ENCODE measurements at regions of chr14 and their contacts with region 1.

Region 1: GRCh38 chr14:21014761-21015190 is 10.1 kb downstream of the NDRG2 start:
- DNase-seq: peak; percentile 92
- ATAC-seq: peak; percentile 91
- H3K4me3 Mint-ChIP-seq: no peak overlapping the region
- H3K27ac Mint-ChIP-seq: no peak overlapping the region
- H3K4me1 Mint-ChIP-seq: peaks cover 12% of the 10 kb centered on the region
- H3K27me3 Mint-ChIP-seq: peaks cover 3% of the 10 kb centered on the region
- CTCF ChIP-seq: peak; percentile 84

Region 2: DNA sequence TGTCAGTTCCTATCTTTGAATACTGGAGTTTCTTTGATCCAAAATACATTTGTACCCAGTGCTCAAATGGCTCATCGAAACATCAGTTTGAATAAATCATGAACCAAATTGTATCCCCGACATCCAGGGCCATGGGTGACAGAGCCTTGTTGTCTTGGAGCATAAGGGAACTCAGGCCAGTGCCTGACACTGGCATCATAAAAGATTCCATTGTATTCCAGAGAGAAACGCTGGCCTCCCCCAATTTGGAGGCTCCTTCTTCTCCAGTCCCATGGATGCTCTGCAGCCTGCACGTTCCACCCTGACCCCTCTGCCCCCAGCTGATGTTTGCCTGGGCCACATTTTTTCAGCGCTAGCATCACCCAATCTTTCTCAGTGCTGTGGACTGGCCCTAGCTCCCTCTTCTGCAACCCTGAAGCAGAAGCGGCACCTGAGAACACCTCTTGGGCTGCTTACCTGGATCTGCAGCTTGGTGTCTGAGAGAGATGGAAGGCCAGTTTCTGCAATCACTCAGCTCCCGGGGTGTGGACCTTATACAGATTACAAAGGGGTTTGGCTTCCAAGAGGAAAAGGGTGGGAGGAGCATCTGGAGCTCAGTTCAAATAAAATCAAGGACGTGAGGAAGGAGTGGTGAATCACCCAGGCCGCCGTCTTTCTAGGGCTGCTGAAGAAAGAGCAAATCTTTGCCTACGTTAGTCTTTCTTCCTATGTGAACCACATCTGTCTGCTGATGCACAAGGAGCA is 212.3 kb before region 1 on chr14 and contains the start of gene RNASE1:
- CTCF ChIA-PET with region 1: no interaction called
- POLR2A ChIA-PET with region 1: no interaction called
- DNase-seq: no peak
- ATAC-seq: no peak; the same call in 1 of the 2 replicates
- H3K4me3 Mint-ChIP-seq: no peak within 1 kb of the TSS
- H3K27ac Mint-ChIP-seq: no peak within 1 kb of the TSS
- H3K4me1 Mint-ChIP-seq: peaks cover 65% of the 10 kb centered on the region
- H3K27me3 Mint-ChIP-seq: no peaks in the 10 kb centered on the region; the same call in 1 of the 2 replicates
- CTCF ChIP-seq: no peak
- total RNA-seq, gene RNASE1: 3.4 to 6.2 TPM (median 4.7 TPM) in 3 replicates

Region 3: DNA sequence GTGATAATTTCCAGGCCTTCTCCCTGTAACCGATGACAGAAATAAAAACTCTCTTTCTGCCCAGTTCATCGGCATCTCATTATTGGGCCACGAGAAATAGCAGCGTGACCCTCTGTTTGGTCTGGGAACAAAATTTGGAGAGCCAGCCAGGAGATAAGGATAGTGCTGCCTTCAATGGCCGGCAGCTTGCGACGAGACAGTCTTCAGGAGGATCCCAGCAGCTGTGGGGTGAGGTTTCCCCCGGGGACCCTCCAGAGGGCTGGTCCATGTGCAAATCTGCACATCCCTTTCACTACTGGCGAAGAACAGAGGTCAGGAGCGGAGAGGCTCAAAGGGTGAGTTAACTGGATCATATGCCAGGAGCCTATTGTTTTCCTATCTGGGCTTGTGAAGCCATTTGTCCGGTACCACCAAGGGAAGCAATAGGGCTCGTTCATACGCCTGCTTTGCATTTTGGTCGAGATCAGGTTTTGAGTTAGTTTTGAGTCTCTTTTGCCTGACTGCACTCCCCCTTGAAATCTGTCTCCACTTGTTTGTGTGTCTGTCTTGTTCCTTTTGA is 10.9 kb before region 1 on chr14:
- CTCF ChIA-PET with region 1: interaction called, 78 read pairs
- POLR2A ChIA-PET with region 1: no interaction called
- DNase-seq: no peak
- ATAC-seq: no peak
- H3K4me3 Mint-ChIP-seq: no peak overlapping the region
- H3K27ac Mint-ChIP-seq: no peak overlapping the region
- H3K4me1 Mint-ChIP-seq: peaks cover 9% of the 10 kb centered on the region
- H3K27me3 Mint-ChIP-seq: no peaks in the 10 kb centered on the region; the same call in 1 of the 2 replicates
- CTCF ChIP-seq: no peak

Region 4: DNA sequence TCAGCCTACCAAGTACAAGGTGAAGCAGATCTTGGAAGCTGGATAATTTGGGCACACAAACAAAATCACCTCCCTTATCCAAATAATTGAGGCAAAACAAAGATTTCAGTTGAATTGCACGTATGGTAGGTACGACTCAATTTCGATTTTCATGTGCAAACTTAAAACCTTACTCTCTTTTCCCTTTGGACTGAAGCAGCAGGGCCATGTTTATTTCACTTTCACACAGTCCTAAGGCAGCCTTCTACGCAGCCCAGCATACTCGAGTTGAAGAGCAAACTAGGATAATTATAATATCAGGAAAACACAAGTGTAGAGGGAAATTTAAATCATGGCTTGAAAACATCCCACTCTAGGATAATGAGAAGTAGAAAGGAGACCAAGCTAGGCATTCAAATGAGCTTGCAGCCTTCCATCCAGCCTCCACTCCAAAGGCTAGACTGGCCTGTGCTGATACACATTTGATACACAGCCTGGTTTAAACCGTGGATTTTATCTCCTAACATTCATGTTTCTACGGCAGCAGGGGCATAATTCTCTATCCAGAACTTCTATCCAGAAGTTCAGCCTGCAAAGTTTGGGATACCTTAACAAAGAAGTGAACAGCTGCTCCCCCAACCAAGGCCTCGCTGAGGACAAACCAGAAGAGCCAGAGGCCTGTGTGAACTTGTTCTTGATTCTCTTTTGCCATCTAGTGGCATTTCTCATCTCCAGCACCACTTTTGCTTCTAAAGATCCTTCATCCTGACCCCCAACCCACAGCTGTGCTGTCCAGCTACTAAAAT is 25.0 kb after region 1 on chr14:
- CTCF ChIA-PET with region 1: interaction called, 670 read pairs
- POLR2A ChIA-PET with region 1: interaction called, 26 read pairs
- DNase-seq: peak; percentile 33
- ATAC-seq: peak; percentile 74
- H3K4me3 Mint-ChIP-seq: peak overlapping the region; percentile 25
- H3K27ac Mint-ChIP-seq: peak overlapping the region; percentile 72; the same call in 1 of the 2 replicates
- H3K4me1 Mint-ChIP-seq: peaks cover 26% of the 10 kb centered on the region
- H3K27me3 Mint-ChIP-seq: peaks cover 3% of the 10 kb centered on the region; the same call in 1 of the 2 replicates
- CTCF ChIP-seq: 0 out of 2 replicates have a peak, but pooled peaks have one; percentile 25

Region 5: DNA sequence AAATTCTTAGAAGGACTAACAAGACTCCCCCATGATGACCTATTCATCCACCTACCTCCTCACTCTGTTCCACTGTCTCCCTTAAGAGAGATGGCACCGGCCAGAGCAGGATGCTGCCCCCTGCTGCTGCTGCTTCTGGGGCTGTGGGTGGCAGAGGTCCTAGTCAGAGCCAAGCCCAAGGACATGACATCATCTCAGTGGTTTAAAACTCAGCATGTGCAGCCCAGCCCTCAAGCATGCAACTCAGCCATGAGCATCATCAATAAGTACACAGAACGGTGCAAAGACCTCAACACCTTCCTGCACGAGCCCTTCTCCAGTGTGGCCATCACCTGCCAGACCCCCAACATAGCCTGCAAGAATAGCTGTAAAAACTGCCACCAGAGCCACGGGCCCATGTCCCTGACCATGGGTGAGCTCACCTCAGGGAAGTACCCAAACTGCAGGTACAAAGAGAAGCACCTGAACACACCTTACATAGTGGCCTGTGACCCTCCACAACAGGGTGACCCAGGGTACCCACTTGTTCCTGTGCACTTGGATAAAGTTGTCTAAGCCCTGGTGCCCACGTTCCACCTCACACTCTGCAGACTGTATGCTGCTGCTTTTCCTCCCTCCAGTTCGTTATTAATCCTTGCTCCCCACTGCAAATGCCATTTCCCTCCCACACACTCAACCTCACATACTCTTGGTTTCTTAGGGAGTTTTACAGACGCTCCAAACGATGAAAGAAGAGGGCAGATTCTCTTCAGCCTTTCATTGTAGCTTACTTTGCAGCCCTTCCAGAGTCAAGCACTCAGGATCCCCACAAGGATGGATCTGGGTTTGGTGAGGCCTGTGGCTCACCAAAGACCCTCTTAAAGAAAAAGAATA is 43.3 kb after region 1 on chr14 and contains the start of gene RNASE8:
- CTCF ChIA-PET with region 1: interaction called, 39 read pairs
- POLR2A ChIA-PET with region 1: no interaction called
- DNase-seq: no peak
- ATAC-seq: no peak
- H3K4me3 Mint-ChIP-seq: no peak within 1 kb of the TSS
- H3K27ac Mint-ChIP-seq: no peak within 1 kb of the TSS
- H3K4me1 Mint-ChIP-seq: peaks cover 7% of the 10 kb centered on the region
- H3K27me3 Mint-ChIP-seq: no peaks in the 10 kb centered on the region
- CTCF ChIP-seq: no peak
- total RNA-seq, gene RNASE8: not detected in 3 replicates

Region 6: DNA sequence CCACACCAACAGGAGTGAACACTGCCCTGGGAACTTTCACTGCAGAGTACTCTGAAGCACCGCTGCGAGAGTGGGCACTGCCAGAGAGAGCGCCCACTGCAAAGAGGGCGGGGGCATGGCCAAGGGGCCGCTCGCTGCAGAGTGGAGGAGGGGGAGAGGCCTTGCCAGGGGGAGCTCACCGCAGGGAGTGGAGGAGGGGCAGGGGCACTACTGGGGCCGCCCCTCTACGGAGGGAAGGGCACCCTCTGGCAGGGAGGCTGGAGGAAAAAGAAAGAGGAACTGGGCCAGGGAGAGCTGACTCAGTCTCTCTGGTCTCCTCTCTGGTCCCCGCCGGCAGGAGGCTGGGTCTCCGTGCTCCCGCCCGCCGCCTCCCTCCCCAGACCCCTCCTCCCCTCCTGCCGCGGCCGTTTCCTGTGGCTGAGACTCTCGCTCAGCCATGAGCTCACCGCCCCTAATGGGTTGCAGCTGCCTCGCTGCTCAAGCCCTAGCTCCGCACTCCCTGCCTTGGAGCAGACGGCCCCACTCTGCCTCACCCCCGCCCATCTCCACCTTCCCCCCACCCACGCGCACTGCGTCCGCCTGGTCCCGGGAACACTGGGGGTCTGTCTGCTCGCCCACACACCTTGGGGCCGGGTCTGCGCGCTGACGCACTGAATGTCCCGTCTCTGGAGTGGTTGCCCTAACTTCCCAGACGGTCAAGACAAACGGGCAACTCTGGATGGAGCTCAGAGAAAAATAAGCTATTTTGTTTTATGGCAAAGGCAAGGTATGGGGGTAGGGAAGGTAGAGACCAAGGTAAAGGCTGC is 56.7 kb after region 1 on chr14:
- CTCF ChIA-PET with region 1: interaction called, 154 read pairs
- POLR2A ChIA-PET with region 1: interaction called, 18 read pairs
- DNase-seq: peak; percentile 88
- ATAC-seq: peak; percentile 46
- H3K4me3 Mint-ChIP-seq: peak overlapping the region; percentile 89
- H3K27ac Mint-ChIP-seq: peak overlapping the region; percentile 80
- H3K4me1 Mint-ChIP-seq: peaks cover 33% of the 10 kb centered on the region
- H3K27me3 Mint-ChIP-seq: peaks cover 4% of the 10 kb centered on the region; the same call in 1 of the 2 replicates
- CTCF ChIP-seq: no peak

Region 7: DNA sequence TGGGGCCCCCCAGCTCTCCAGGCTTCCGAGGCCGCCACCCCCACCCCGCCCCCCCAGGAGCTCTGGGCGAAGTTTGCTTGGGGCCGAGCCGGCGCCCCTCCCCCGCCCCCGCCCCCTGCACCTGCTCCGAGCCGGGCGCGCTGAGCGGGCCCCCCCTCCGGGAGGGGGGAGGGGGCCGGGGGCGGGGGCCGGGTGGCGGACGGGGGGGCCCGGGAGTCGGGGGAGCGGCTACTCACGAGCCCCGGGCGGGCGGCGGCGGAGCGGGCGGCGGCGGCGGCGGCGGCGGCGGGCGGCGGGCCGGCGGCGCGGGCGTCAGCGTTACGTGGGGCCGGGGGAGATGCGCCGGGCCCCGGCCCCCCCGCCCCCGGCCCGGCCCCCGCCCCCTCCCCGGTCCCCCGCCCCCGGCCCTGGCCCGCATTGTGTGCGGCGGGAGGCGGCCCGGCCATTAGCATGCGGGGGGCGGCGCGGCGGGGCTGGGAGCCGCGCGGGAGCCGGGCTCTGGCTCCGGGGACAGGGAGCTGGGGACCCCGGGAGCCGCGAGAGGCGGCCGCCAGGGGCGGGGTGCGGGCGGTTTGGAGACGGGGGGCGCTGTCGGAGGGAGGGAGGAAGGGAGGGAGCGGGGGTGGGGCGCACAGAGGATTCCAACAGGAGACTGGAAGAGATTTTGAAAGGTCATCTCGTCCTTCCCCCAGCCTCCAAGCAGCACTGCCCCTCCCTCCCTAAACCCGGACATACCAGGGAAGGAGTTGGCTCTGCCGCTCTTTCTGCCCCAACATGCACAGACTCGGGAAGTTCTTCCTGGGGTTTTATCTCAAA is 83.5 kb after region 1 on chr14 and contains the start of gene ZNF219:
- CTCF ChIA-PET with region 1: interaction called, 127 read pairs
- POLR2A ChIA-PET with region 1: interaction called, 7 read pairs
- DNase-seq: peak; percentile 82
- ATAC-seq: peak; percentile 21
- H3K4me3 Mint-ChIP-seq: peak within 1 kb of the TSS; percentile 90
- H3K27ac Mint-ChIP-seq: peak within 1 kb of the TSS; percentile 97
- H3K4me1 Mint-ChIP-seq: peaks cover 75% of the 10 kb centered on the region
- H3K27me3 Mint-ChIP-seq: no peaks in the 10 kb centered on the region
- CTCF ChIP-seq: no peak
- total RNA-seq, gene ZNF219: 149 to 154 TPM (median 149 TPM) in 3 replicates